A673 (cell line): ENCODE measurements at regions of chr11 and their contacts with region 1.

Region 1: DNA sequence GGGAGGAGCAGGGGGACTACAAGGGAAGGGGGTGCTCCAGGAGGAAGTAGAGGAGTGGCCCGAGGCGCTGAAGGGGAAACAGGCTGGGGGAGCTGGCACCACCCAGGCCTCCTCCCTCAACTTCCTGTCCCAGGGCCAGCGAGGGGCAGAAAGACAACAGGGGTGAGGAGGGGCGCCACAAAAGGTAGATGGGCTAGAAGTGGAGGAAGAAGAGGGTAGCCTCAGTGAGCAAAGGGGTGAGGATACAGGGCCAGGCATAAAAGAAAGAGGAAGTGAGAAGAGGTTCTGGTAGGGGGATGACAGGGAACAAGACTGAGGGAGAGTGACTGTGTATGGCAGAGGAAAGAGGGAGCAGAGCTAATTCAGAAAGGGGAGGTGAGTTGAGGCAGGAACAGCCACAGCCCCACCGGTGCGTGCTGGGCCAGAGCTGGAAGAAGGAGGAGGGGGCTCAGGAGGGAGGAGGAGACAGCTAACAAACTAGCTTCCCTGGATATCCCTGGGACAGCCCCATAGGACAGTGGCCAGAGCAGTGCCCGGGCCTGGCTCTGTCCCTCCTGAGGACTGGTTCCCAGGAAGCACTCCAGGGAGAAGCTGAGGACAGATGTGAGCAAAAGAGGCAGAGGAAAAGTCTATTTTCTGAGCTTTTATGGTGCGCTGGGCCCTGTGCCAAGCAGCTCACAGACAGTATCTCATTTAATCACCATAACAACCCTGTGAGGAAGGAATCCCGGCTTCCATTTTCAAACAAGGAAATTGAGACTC is 8.5 kb downstream of the DCHS1 start:
- DNase-seq: peak; percentile 57
- H3K4me3 ChIP-seq: no peak overlapping the region
- H3K27ac ChIP-seq: peak overlapping the region; percentile 61
- H3K4me1 ChIP-seq: peaks cover 15% of the 10 kb centered on the region
- H3K27me3 ChIP-seq: no peaks in the 10 kb centered on the region
- CTCF ChIP-seq: no peak

Region 2: GRCh38 chr11:6022956-6023355 is 624.1 kb before region 1 on chr11:
- CTCF ChIA-PET with region 1: no interaction called
- POLR2A ChIA-PET with region 1: interaction called, 13 read pairs
- intact Hi-C with region 1: no loop called
- DNase-seq: peak; percentile 40
- H3K4me3 ChIP-seq: no peak overlapping the region
- H3K27ac ChIP-seq: no peak overlapping the region
- H3K4me1 ChIP-seq: no peaks in the 10 kb centered on the region
- H3K27me3 ChIP-seq: peaks cover 5% of the 10 kb centered on the region
- CTCF ChIP-seq: peak; percentile 58